Pancreas (tissue), 10 donors: ENCODE measurements at regions of chr2 and their contacts with region 1.

Region 1: DNA sequence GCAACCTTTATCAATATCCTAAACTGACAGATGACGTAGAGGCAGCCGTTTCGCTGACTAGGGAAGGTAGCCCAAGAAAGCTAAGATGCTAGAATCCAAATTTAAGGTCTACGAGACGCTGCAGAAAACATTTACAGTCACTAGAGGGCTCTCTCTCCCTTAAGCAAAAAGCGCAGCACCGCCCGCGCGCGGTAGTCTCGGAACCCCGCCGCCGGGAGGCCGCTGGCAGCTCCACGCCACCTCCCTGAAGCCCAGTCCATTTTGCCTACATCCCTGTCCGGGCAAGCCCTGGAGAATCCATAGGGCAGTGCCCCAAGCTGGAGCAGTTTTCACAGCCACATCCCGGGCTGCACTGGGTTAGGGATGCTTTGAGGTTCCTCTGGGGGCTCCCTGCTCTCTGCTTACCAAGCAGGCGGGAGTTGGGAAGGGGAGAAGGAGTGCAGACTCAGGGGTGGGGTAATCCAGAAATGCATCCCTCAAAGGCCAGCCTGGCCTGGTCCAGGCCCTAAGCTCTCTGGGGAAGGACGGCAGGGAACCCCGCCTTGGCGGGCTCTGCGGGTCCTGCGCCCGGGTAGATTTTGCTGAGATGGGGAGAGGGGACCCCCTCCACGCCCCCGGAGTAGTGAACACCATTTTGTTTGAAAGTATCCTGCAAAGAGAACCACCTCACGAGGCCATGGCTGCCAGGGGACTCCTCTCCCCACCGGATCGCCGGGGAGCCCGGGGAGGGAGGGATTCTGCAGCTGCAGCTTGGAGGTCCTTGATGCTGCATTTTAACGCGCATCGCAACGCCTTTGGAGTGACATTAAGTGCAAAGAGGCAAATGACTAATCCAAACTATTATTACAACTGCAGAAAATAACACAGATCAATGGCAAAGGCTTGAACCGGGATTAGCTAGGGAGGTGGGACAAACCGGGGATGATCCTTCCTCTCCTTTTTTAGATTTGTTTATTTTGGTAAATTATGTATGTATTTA is 1.3 kb upstream of the DPYSL5 start:
- DNase-seq: peak; percentile 32 to 85 (median 56)
- ATAC-seq: peak; percentile 68 to 91 (median 90)
- H3K4me3 ChIP-seq: no peak overlapping the region
- H3K27ac ChIP-seq: no peak overlapping the region
- H3K4me1 ChIP-seq: peaks cover 5 to 23% (median 12%) of the 10 kb centered on the region in 3 donors
- H3K27me3 ChIP-seq: peaks cover 2 to 46% (median 12%) of the 10 kb centered on the region in 4 donors
- CTCF ChIP-seq: peak; percentile 15 to 61 (median 56)

Region 2: DNA sequence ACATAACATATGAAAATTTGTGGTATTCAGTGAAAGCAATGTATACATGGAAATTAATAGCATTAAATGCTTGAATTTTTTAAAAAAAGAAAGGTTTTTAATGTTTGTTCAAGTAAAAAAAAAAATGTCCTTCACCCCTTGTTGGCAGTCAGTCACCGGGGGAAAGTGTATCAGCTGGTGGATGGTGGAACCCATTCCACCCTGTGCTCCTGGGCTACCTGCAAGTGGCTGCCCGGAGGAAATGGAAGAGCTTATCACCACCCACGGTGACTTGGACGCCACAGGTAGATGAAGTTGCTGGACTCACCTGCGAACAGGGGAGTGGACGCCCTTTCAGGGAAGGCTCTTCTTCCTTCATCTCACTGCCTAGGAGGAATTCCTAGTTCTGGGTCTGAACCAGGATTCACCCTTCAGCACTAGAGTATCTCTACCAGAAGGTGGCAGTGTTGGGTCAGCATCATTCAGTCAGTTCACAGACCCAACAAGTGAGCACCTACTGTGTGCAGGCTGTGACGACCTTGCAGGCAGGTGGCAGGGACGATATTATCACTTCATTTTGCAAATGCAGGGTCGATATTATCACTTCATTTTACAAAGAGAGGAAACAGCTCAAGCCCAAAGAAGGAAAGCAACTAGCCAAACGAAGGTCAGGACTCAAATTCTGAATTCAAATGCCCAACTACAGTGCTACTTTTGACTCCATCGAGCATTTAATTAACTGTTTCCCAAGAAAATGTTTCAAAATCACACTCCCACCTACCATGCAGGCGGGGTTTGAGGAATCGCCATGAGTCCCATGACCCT is 241.2 kb before region 1 on chr2:
- intact Hi-C with region 1: no loop called
- DNase-seq: peak in 2 of 6 donors; percentile 26 to 56
- ATAC-seq: peak; percentile 44 to 77 (median 73)
- H3K4me3 ChIP-seq: no peak overlapping the region
- H3K27ac ChIP-seq: no peak overlapping the region
- H3K4me1 ChIP-seq: peaks cover 4 to 26% (median 15%) of the 10 kb centered on the region in 3 donors
- H3K27me3 ChIP-seq: no peaks in the 10 kb centered on the region
- CTCF ChIP-seq: peak; percentile 62 to 74 (median 71)

Region 3: DNA sequence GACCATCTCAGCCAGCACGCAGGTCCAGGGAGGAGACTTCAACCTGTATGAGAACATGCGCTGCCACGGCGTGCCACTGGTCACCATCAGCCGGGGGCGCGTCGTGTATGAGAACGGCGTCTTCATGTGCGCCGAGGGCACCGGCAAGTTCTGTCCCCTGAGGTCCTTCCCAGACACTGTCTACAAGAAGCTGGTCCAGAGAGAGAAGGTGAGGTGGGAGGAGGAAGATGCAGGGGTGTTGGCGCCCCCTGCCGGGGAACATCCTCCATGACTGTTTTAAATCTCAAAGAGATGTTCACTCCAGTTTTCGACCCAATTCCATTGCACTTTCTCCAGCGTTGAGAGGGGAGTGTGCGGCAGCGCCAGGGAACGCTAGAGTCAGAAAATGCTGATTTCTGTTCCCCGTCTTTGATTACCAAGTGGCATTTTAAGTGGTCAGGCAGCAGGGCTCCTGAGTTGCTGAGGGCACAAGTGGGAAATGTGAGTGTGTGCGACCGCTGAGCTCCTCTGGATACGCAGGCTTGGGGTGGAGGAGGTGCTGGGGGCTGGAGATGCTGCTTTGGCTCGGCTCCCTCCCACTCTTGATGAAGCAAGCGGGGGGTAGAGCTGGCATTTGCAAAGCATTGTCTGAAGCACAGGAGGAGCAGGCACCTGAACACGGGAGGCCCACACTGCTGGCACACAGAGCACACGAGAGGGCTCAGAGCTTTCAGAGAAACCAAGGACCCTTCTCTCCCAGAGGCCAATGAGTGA is 96.1 kb after region 1 on chr2:
- intact Hi-C with region 1: loop called in 2 of 3 experiments (anchors 2 to 5 kb)
- DNase-seq: peak in 5 of 6 donors; percentile 36 to 83 (median 55)
- ATAC-seq: peak; percentile 36 to 67 (median 64)
- H3K4me3 ChIP-seq: no peak overlapping the region
- H3K27ac ChIP-seq: no peak overlapping the region
- H3K4me1 ChIP-seq: peaks cover 0 to 5% (median 4%) of the 10 kb centered on the region in 3 donors
- H3K27me3 ChIP-seq: no peaks in the 10 kb centered on the region
- CTCF ChIP-seq: peak; percentile 72 to 86 (median 82)

Region 4: GRCh38 chr2:26993768-26994167 is 147.2 kb after region 1 on chr2:
- intact Hi-C with region 1: no loop called
- DNase-seq: no peak
- ATAC-seq: no peak
- H3K4me3 ChIP-seq: no peak overlapping the region
- H3K27ac ChIP-seq: no peak overlapping the region
- H3K4me1 ChIP-seq: no peaks in the 10 kb centered on the region
- H3K27me3 ChIP-seq: no peaks in the 10 kb centered on the region
- CTCF ChIP-seq: no peak

Region 5: GRCh38 chr2:27016801-27017325 is 170.2 kb after region 1 on chr2:
- intact Hi-C with region 1: loop called in 1 of 3 experiments (anchors 10 kb)
- DNase-seq: peak in 1 of 6 donors; percentile 53
- ATAC-seq: peak; percentile 55 to 80 (median 75)
- H3K4me3 ChIP-seq: no peak overlapping the region
- H3K27ac ChIP-seq: no peak overlapping the region
- H3K4me1 ChIP-seq: no peaks in the 10 kb centered on the region
- H3K27me3 ChIP-seq: no peaks in the 10 kb centered on the region
- CTCF ChIP-seq: peak; percentile 34 to 55 (median 46)